HCT116 (cell line): ENCODE measurements at regions of chr3 and their contacts with region 1.

Region 1: DNA sequence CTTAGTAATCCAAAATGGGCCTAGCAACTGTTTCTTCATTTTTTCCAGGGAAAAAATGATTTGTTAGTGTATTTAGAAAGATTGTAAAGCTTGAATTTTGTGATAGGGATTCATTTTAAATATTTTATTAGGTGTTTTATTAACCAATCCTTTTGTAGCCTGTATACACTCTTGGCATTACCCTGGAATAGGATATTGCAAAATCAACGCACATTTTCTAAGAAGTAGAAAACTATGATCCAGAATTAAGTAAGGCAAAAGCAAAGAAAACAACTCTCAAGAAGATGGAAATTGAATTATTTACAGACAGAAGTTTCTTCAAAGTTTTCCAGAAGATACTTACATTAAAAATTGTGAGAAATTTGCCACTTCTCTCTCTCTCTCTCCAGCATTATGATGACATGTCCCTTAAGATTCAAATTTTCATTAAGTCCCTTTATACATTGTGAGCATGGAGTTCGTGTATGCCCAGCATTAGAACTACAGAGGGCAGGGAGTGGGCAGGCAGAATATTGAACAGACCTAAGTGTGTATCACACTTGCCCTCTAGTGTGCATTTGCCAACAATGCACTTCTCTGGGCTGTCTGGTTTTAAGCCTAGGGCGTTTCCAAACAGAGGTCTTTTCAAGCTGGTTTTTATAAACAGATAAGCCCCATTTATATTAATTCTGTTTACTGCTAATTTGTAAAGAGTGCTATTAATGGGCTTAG is 28.5 kb upstream of the CMSS1 start:
- DNase-seq: peak; percentile 57
- ATAC-seq: peak; percentile 100
- H3K4me3 ChIP-seq: no peak overlapping the region
- H3K27ac ChIP-seq: no peak overlapping the region
- H3K4me1 ChIP-seq: no peaks in the 10 kb centered on the region
- H3K27me3 ChIP-seq: peaks cover 14% of the 10 kb centered on the region; the same call in 1 of the 2 replicates
- CTCF ChIP-seq: peak; percentile 53 to 76 (median 68); a peak in 5 of 6 replicates
- POLR2A ChIP-seq: no peak
- RAD21 ChIP-seq: peak; percentile 68

Region 2: GRCh38 chr3:99128725-99129505 is 660.3 kb before region 1 on chr3:
- CTCF ChIA-PET with region 1: no interaction called
- POLR2A ChIA-PET with region 1: no interaction called
- RAD21 ChIA-PET with region 1: no interaction called
- intact Hi-C with region 1: loop called (anchors 10 kb)
- DNase-seq: peak; percentile 79
- ATAC-seq: peak; percentile 96
- H3K4me3 ChIP-seq: peak overlapping the region in 1 of 2 experiments; percentile 28; a peak in 1 of 4 replicates
- H3K27ac ChIP-seq: no peak overlapping the region
- H3K4me1 ChIP-seq: peaks cover 0 to 31% of the 10 kb centered on the region in 2 experiments; a peak in 2 of 4 replicates
- H3K27me3 ChIP-seq: no peaks in the 10 kb centered on the region
- CTCF ChIP-seq: no peak
- POLR2A ChIP-seq: no peak
- RAD21 ChIP-seq: no peak

Region 3: GRCh38 chr3:99175276-99175812 is 613.8 kb before region 1 on chr3:
- CTCF ChIA-PET with region 1: no interaction called
- POLR2A ChIA-PET with region 1: no interaction called
- RAD21 ChIA-PET with region 1: no interaction called
- intact Hi-C with region 1: no loop called
- DNase-seq: no peak
- ATAC-seq: no peak
- H3K4me3 ChIP-seq: no peak overlapping the region
- H3K27ac ChIP-seq: no peak overlapping the region
- H3K4me1 ChIP-seq: no peaks in the 10 kb centered on the region
- H3K27me3 ChIP-seq: no peaks in the 10 kb centered on the region
- CTCF ChIP-seq: no peak
- POLR2A ChIP-seq: no peak
- RAD21 ChIP-seq: no peak

Region 4: GRCh38 chr3:99799420-99799819 is 10.3 kb after region 1 on chr3:
- CTCF ChIA-PET with region 1: no interaction called
- POLR2A ChIA-PET with region 1: no interaction called
- RAD21 ChIA-PET with region 1: no interaction called
- intact Hi-C with region 1: no loop called
- DNase-seq: no peak
- ATAC-seq: no peak
- H3K4me3 ChIP-seq: no peak overlapping the region
- H3K27ac ChIP-seq: no peak overlapping the region
- H3K4me1 ChIP-seq: no peaks in the 10 kb centered on the region
- H3K27me3 ChIP-seq: no peaks in the 10 kb centered on the region
- CTCF ChIP-seq: no peak
- POLR2A ChIP-seq: no peak
- RAD21 ChIP-seq: no peak

Region 5: GRCh38 chr3:100260685-100261484 is 471.7 kb after region 1 on chr3 and contains the start of gene TBC1D23:
- CTCF ChIA-PET with region 1: no interaction called
- POLR2A ChIA-PET with region 1: no interaction called
- RAD21 ChIA-PET with region 1: no interaction called
- intact Hi-C with region 1: no loop called
- DNase-seq: peak; percentile 99
- ATAC-seq: peak; percentile 100
- H3K4me3 ChIP-seq: peak within 1 kb of the TSS; percentile 90 to 92
- H3K27ac ChIP-seq: peak within 1 kb of the TSS; percentile 50
- H3K4me1 ChIP-seq: peaks cover 6 to 16% of the 10 kb centered on the region in 2 experiments; a peak in 3 of 4 replicates
- H3K27me3 ChIP-seq: no peaks in the 10 kb centered on the region
- CTCF ChIP-seq: no peak
- POLR2A ChIP-seq: peak; percentile 59
- RAD21 ChIP-seq: no peak; the same call in 1 of the 2 replicates
- total RNA-seq, gene TBC1D23: 21.9 TPM